ENCODE measurements at regions of chr2 and their contacts with region 1.

Region 1: GRCh38 chr2:30421604-30422443 is 25.2 kb upstream of the LCLAT1 start:
- DNase-seq: peak; percentile 75
- H3K4me3 ChIP-seq: peak overlapping the region; percentile 40
- CTCF ChIP-seq: no peak

Region 2: DNA sequence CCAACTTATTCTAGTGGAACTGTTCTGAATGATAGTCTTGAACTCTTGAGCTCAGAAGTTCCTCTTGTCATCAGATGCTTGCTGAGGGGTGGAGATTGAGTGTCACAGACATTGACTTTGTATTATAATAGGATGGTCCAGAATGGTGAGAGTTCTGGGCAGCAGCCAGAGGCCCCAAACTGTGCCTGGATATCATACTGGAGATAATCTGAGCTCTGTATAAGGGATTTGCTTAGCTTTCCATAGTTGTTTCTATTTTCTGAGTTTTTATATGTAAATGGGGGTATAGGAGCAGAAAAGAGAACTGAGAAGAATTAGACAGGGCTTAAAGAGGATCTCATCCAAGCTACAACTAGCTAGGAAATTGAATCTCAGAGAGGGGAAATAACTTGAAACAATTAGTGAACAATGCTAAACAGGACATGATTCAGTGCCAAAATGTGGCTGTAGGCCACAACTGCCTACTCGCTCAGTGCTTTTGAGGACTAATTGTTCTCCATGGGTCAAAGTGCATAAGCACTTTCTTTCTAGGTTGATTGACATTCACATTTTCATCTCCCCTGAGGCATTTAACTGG is 15.1 kb after region 1 on chr2:
- CTCF ChIA-PET with region 1: interaction called, 10 read pairs
- POLR2A ChIA-PET with region 1: interaction called, 4 read pairs
- DNase-seq: no peak
- H3K4me3 ChIP-seq: no peak overlapping the region
- CTCF ChIP-seq: no peak

Region 3: DNA sequence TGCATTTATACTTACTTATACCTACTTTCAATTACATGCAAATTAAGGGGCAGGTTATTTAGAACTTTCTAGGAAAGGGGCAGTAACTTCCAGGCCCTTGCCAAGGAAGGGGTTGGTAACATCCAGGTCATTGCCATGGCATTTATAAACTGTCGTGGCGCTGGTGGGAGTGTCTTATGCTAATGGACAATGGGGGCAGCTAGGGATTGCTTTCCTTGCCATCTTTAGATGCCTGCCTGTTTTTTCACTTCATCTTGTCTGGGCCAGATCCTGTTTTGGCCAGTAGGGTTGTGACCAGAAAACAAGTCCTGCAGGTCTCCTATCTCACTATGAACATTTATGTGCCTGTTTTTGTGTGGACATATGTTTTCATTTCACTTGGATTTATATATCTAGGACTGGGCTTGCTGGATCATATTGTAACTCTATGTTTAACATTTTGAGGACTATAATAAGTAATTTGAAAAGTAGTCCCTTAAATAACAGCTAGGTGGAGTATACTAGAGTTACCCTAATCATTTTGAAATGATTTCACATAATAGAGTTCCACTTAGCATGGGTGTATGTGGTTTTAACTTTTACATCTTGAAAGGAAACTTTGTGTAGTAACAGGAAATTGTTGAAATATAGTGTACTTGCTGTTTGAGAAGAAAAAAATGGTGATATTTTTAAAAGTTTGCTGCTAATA is 81.3 kb after region 1 on chr2:
- CTCF ChIA-PET with region 1: no interaction called
- POLR2A ChIA-PET with region 1: no interaction called
- DNase-seq: no peak
- H3K4me3 ChIP-seq: no peak overlapping the region
- CTCF ChIP-seq: no peak